IMR-90 (cell line): ENCODE measurements at regions of chr14 and their contacts with region 1.

Region 1: GRCh38 chr14:23068476-23069412 is 11.4 kb upstream of the CDH24 start:
- DNase-seq: peak; percentile 93
- ATAC-seq: peak; percentile 69
- H3K4me3 ChIP-seq: no peak overlapping the region
- H3K27ac ChIP-seq: peak overlapping the region; percentile 14
- H3K4me1 ChIP-seq: peaks cover 13% of the 10 kb centered on the region
- H3K27me3 ChIP-seq: no peaks in the 10 kb centered on the region
- CTCF ChIP-seq: peak; percentile 100
- POLR2A ChIP-seq: no peak
- RAD21 ChIP-seq: peak; percentile 80

Region 2: GRCh38 chr14:22282417-22282816 is 786.3 kb before region 1 on chr14:
- CTCF ChIA-PET with region 1: no interaction called
- POLR2A ChIA-PET with region 1: no interaction called
- dilution Hi-C with region 1: no loop called
- in situ Hi-C with region 1: no loop called
- intact Hi-C with region 1: no loop called
- DNase-seq: no peak
- ATAC-seq: no peak
- H3K4me3 ChIP-seq: no peak overlapping the region
- H3K27ac ChIP-seq: no peak overlapping the region
- H3K4me1 ChIP-seq: 0 out of 2 replicates have a peak, but pooled peaks cover 1% of the 10 kb centered on the region
- H3K27me3 ChIP-seq: no peaks in the 10 kb centered on the region
- CTCF ChIP-seq: no peak
- POLR2A ChIP-seq: no peak
- RAD21 ChIP-seq: no peak

Region 3: GRCh38 chr14:22542360-22542759 is 526.4 kb before region 1 on chr14:
- CTCF ChIA-PET with region 1: no interaction called
- POLR2A ChIA-PET with region 1: no interaction called
- dilution Hi-C with region 1: no loop called
- in situ Hi-C with region 1: no loop called
- intact Hi-C with region 1: no loop called
- DNase-seq: no peak
- ATAC-seq: no peak
- H3K4me3 ChIP-seq: no peak overlapping the region
- H3K27ac ChIP-seq: no peak overlapping the region
- H3K4me1 ChIP-seq: peaks cover 18% of the 10 kb centered on the region
- H3K27me3 ChIP-seq: peaks cover 3% of the 10 kb centered on the region; the same call in 1 of the 2 replicates
- CTCF ChIP-seq: no peak
- POLR2A ChIP-seq: no peak
- RAD21 ChIP-seq: no peak

Region 4: DNA sequence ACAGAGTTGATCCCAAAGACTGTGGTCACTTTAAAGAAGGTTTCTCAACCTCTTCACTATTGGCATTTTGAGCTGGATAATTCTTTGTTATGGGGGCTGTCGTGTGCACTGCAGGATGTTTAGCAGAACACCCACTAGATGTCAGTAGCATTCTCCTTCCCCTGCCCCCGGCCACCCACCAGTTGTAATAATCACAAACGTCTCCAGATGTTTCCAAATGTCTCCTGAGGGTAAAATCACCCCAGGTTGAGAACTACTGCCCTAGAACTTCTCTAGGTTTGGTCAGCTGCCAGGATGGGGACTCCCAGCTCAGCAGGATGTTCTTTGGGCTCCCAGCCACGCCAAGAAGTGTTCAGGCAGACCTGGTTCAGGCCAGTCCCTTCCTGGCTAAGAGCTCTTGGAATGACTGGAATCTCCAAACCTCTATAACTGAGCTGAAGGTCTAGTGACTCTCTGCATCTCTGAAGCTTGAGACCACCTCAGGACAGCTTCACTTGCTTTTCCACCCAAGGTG is 73.9 kb before region 1 on chr14:
- CTCF ChIA-PET with region 1: interaction called, 12 read pairs
- POLR2A ChIA-PET with region 1: interaction called, 4 read pairs
- dilution Hi-C with region 1: no loop called
- in situ Hi-C with region 1: no loop called
- intact Hi-C with region 1: no loop called
- DNase-seq: peak; percentile 48
- ATAC-seq: peak; percentile 94
- H3K4me3 ChIP-seq: no peak overlapping the region
- H3K27ac ChIP-seq: no peak overlapping the region
- H3K4me1 ChIP-seq: peaks cover 4% of the 10 kb centered on the region
- H3K27me3 ChIP-seq: no peaks in the 10 kb centered on the region; the same call in 1 of the 2 replicates
- CTCF ChIP-seq: peak; percentile 71
- POLR2A ChIP-seq: no peak
- RAD21 ChIP-seq: peak; percentile 71

Region 5: GRCh38 chr14:23047034-23047634 is 21.6 kb before region 1 on chr14:
- CTCF ChIA-PET with region 1: no interaction called
- POLR2A ChIA-PET with region 1: no interaction called
- dilution Hi-C with region 1: no loop called
- in situ Hi-C with region 1: no loop called
- intact Hi-C with region 1: no loop called
- DNase-seq: no peak
- ATAC-seq: peak; percentile 41
- H3K4me3 ChIP-seq: no peak overlapping the region
- H3K27ac ChIP-seq: no peak overlapping the region
- H3K4me1 ChIP-seq: peaks cover 4% of the 10 kb centered on the region
- H3K27me3 ChIP-seq: no peaks in the 10 kb centered on the region
- CTCF ChIP-seq: no peak
- POLR2A ChIP-seq: no peak
- RAD21 ChIP-seq: no peak

Region 6: DNA sequence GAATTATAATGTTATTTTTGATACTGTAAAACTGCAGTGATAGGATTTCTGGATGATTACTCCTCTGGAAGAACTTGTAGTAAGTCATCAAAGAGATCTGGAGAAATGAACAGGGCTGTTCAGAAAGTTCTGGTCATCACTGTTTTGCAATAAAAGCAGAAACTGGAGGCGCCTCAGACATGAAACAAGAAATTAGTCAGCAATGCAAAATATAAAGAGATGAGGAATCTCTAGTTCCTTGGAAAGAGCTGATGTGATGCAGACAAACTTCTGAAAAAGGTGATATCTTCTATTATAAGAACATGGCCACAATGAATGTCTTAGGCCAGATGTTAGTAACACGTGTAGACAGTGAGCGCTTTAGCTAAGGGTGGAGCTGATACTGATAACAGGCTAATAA is 16.7 kb after region 1 on chr14:
- CTCF ChIA-PET with region 1: interaction called, 8 read pairs
- POLR2A ChIA-PET with region 1: interaction called, 3 read pairs
- dilution Hi-C with region 1: no loop called
- in situ Hi-C with region 1: no loop called
- intact Hi-C with region 1: loop called (anchors 1 kb)
- DNase-seq: peak; percentile 27
- ATAC-seq: peak; percentile 56
- H3K4me3 ChIP-seq: no peak overlapping the region
- H3K27ac ChIP-seq: no peak overlapping the region
- H3K4me1 ChIP-seq: no peaks in the 10 kb centered on the region; the same call in 1 of the 2 replicates
- H3K27me3 ChIP-seq: no peaks in the 10 kb centered on the region
- CTCF ChIP-seq: no peak
- POLR2A ChIP-seq: no peak
- RAD21 ChIP-seq: no peak

Region 7: GRCh38 chr14:23104591-23105347 is 36.0 kb after region 1 on chr14 and contains the start of gene CIROP:
- CTCF ChIA-PET with region 1: interaction called, 18 read pairs
- POLR2A ChIA-PET with region 1: no interaction called
- dilution Hi-C with region 1: no loop called
- in situ Hi-C with region 1: loop called (anchors 5 kb)
- intact Hi-C with region 1: loop called (anchors 1 kb)
- DNase-seq: peak; percentile 22
- ATAC-seq: peak; percentile 52
- H3K4me3 ChIP-seq: no peak within 1 kb of the TSS
- H3K27ac ChIP-seq: peak within 1 kb of the TSS; percentile 22; the same call in 1 of the 2 replicates
- H3K4me1 ChIP-seq: peaks cover 6% of the 10 kb centered on the region
- H3K27me3 ChIP-seq: no peaks in the 10 kb centered on the region
- CTCF ChIP-seq: no peak
- POLR2A ChIP-seq: no peak
- RAD21 ChIP-seq: no peak
- total RNA-seq, gene CIROP: 0.28 and 0.36 TPM in 2 replicates

Region 8: GRCh38 chr14:23114669-23115491 is 46.1 kb after region 1 on chr14:
- CTCF ChIA-PET with region 1: interaction called, 18 read pairs
- POLR2A ChIA-PET with region 1: no interaction called
- dilution Hi-C with region 1: no loop called
- in situ Hi-C with region 1: no loop called
- intact Hi-C with region 1: no loop called
- DNase-seq: peak; percentile 99
- ATAC-seq: peak; percentile 88
- H3K4me3 ChIP-seq: no peak overlapping the region
- H3K27ac ChIP-seq: peak overlapping the region; percentile 79
- H3K4me1 ChIP-seq: peaks cover 29% of the 10 kb centered on the region
- H3K27me3 ChIP-seq: no peaks in the 10 kb centered on the region
- CTCF ChIP-seq: 0 out of 2 replicates have a peak, but pooled peaks have one; percentile 3
- POLR2A ChIP-seq: peak; percentile 75; the same call in 1 of the 2 replicates
- RAD21 ChIP-seq: no peak; the same call in 1 of the 2 replicates